ENCODE measurements at regions of chr6 and their contacts with region 1.

Region 1: DNA sequence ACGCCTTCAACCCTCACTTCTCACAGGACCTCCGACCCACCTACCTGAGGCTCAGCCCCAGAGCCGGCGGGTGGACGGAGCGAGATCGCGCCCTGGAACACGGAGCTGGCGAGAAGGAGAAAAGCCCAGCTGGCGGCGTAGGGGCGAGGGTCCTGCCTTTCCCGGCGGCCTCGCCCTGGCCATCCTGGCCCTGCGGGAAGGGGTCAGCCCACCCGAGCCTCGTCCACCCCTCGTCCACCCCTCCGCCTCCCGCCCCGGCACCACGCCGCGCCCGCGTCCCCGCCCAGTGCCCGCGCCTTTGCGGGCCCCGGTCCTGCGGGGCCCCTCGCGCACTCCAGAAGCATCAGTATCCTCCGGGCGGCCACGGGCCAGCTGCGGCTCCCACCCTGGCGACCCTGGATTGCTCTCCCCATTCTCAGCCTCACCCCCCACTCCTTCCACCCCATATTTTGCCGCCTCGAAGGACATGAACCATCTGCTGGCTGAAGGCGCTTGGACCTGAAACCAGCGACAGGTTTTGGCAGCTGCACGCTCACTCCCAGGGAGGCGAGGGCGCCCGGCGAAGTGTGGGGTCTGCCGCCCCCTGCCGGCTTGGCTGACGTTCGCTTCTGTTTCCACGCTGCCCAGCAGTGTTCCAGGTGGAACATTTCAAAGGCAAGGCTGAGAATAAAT is 65.1 kb downstream of the PLG start:
- DNase-seq: peak; percentile 62
- ATAC-seq: peak; percentile 75
- H3K4me3 Mint-ChIP-seq: peak overlapping the region; percentile 43
- H3K27ac Mint-ChIP-seq: no peak overlapping the region
- H3K4me1 Mint-ChIP-seq: no peaks in the 10 kb centered on the region
- H3K27me3 Mint-ChIP-seq: peaks cover 32% of the 10 kb centered on the region
- CTCF ChIP-seq: peak; percentile 75

Region 2: GRCh38 chr6:160750276-160750689 is 16.8 kb before region 1 on chr6:
- CTCF ChIA-PET with region 1: interaction called, 10 read pairs
- POLR2A ChIA-PET with region 1: no interaction called
- intact Hi-C with region 1: no loop called
- DNase-seq: peak; percentile 41
- ATAC-seq: no peak
- H3K4me3 Mint-ChIP-seq: no peak overlapping the region
- H3K27ac Mint-ChIP-seq: no peak overlapping the region
- H3K4me1 Mint-ChIP-seq: no peaks in the 10 kb centered on the region
- H3K27me3 Mint-ChIP-seq: peaks cover 13% of the 10 kb centered on the region
- CTCF ChIP-seq: peak; percentile 35

Measured in activated CD8-positive, alpha-beta T cell treated with anti-CD3 and anti-CD28 coated beads for 36 hours (primary cell).